ENCODE measurements at regions of chr12 and their contacts with region 1.

Region 1: DNA sequence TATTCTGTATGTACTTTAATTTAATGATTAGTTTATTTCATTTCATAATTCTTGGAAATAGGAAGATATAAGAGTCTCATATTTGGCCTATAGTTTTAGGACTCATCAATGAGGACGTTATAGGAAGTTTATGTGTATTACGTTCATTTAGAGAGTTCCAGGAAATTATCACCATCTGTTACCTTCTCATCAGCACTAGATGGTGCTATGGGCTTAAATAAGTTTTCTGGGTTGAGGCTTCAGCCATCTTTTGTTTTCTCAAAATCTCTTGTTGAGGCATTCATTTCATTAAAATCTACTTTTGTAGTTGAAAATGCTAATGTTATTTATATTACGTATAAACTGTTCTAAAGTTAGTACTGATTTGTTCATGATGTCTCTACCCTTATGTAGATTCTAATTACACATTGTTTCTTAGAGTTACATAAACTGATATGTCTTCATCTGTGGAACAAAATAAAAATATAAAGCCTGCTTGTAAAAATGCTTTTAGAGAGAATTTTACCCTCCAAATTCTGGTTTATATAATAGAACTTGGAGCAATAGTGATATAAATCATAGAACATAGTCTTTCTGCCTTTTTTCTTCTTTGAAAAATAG is 89.2 kb downstream of the CFAP54 start:
- DNase-seq: peak in 1 of 2 donors; percentile 79
- ATAC-seq: peak; percentile 53 to 88 (median 66)
- H3K4me3 ChIP-seq: no peak overlapping the region
- H3K4me3 Mint-ChIP-seq: no peak overlapping the region
- H3K27ac ChIP-seq: no peak overlapping the region
- H3K27ac Mint-ChIP-seq: no peak overlapping the region
- H3K4me1 ChIP-seq: no peaks in the 10 kb centered on the region
- H3K4me1 Mint-ChIP-seq: no peaks in the 10 kb centered on the region
- H3K27me3 ChIP-seq: peaks cover 2% of the 10 kb centered on the region
- H3K27me3 Mint-ChIP-seq: peaks cover 7 to 20% of the 10 kb centered on the region in 2 donors
- CTCF ChIP-seq: peak; percentile 66

Region 2: GRCh38 chr12:96985480-96986362 is 407.1 kb after region 1 on chr12:
- intact Hi-C with region 1: loop called (anchors 1 kb)
- DNase-seq: peak; percentile 33 to 70
- ATAC-seq: peak; percentile 78 to 93 (median 84)
- H3K4me3 ChIP-seq: peak overlapping the region; percentile 11
- H3K4me3 Mint-ChIP-seq: peak overlapping the region; percentile 75
- H3K27ac ChIP-seq: no peak overlapping the region
- H3K27ac Mint-ChIP-seq: no peak overlapping the region
- H3K4me1 ChIP-seq: peaks cover 7% of the 10 kb centered on the region
- H3K4me1 Mint-ChIP-seq: peaks cover 9 to 10% of the 10 kb centered on the region in 2 donors
- H3K27me3 ChIP-seq: peaks cover 21% of the 10 kb centered on the region
- H3K27me3 Mint-ChIP-seq: peaks cover 25 to 48% of the 10 kb centered on the region in 2 donors
- CTCF ChIP-seq: peak; percentile 81

Region 3: DNA sequence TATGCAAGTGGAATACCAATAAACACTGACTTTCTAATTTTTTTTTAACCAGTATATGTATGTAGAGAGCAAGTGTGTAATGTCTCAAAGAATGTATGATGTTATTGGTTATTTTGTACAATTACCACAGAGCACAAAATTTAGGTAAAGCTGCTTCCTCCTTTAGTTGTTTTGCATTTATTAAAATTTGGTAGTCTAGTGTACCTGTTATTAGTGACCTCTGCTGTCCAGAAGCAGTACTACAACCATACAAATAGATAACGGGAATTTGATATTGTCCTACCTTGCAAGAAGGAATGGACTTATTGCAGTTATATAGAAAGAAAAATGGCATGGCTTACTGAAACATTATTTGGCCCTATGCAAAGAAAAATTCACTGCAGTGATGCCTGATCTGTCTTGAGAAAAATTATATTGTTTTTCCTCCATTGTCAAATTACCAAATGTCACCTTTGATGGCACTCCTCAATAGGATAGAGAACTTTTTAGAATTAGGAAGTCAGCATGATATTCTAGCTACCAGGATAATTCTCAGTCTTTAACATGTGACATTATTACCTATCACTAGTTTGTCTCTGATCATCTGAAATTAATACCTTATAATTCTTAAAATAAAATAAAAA is 730.1 kb after region 1 on chr12:
- intact Hi-C with region 1: loop called (anchors 1 kb)
- DNase-seq: peak in 1 of 2 donors; percentile 77
- ATAC-seq: peak in 2 of 3 donors; percentile 49 to 71
- H3K4me3 ChIP-seq: no peak overlapping the region
- H3K4me3 Mint-ChIP-seq: no peak overlapping the region
- H3K27ac ChIP-seq: no peak overlapping the region
- H3K27ac Mint-ChIP-seq: no peak overlapping the region
- H3K4me1 ChIP-seq: no peaks in the 10 kb centered on the region
- H3K4me1 Mint-ChIP-seq: no peaks in the 10 kb centered on the region
- H3K27me3 ChIP-seq: no peaks in the 10 kb centered on the region
- H3K27me3 Mint-ChIP-seq: peaks cover 14 to 15% of the 10 kb centered on the region in 2 donors
- CTCF ChIP-seq: peak; percentile 77